PC-3 (cell line): ENCODE measurements at regions of chr12 and their contacts with region 1.

Region 1: GRCh38 chr12:104187446-104188155 is 28.0 kb upstream of the TXNRD1 start:
- DNase-seq: no peak
- ATAC-seq: peak; percentile 50
- H3K4me3 ChIP-seq: no peak overlapping the region
- H3K27ac ChIP-seq: no peak overlapping the region
- H3K4me1 ChIP-seq: no peaks in the 10 kb centered on the region
- H3K27me3 ChIP-seq: no peaks in the 10 kb centered on the region
- CTCF ChIP-seq: no peak

Region 2: GRCh38 chr12:104234926-104235499 is 47.4 kb after region 1 on chr12:
- CTCF ChIA-PET with region 1: no interaction called
- POLR2A ChIA-PET with region 1: no interaction called
- intact Hi-C with region 1: no loop called
- DNase-seq: no peak
- ATAC-seq: no peak
- H3K4me3 ChIP-seq: no peak overlapping the region
- H3K27ac ChIP-seq: no peak overlapping the region
- H3K4me1 ChIP-seq: no peaks in the 10 kb centered on the region
- H3K27me3 ChIP-seq: no peaks in the 10 kb centered on the region
- CTCF ChIP-seq: no peak

Region 3: GRCh38 chr12:104596134-104596799 is 408.7 kb after region 1 on chr12:
- CTCF ChIA-PET with region 1: no interaction called
- POLR2A ChIA-PET with region 1: interaction called, 12 read pairs
- intact Hi-C with region 1: no loop called
- DNase-seq: no peak
- ATAC-seq: no peak
- H3K4me3 ChIP-seq: no peak overlapping the region
- H3K27ac ChIP-seq: no peak overlapping the region
- H3K4me1 ChIP-seq: peaks cover 20% of the 10 kb centered on the region
- H3K27me3 ChIP-seq: no peaks in the 10 kb centered on the region
- CTCF ChIP-seq: no peak